Spleen (tissue), 13 donors: ENCODE measurements at regions of chr19 and their contacts with region 1.

Region 1: GRCh38 chr19:33143897-33144405 is 12.0 kb downstream of the WDR88 start:
- DNase-seq: peak; percentile 85
- H3K4me3 ChIP-seq: peak overlapping the region in 1 of 8 donors; percentile 41
- H3K27ac ChIP-seq: peak overlapping the region in 2 of 8 donors; percentile 42 to 65
- H3K4me1 ChIP-seq: peaks cover 4 to 12% (median 6%) of the 10 kb centered on the region in 6 donors
- H3K27me3 ChIP-seq: peaks cover 0 to 11% (median 0%) of the 10 kb centered on the region in 7 donors
- CTCF ChIP-seq: peak; percentile 77 to 94 (median 92)
- POLR2A ChIP-seq: no peak

Region 2: GRCh38 chr19:33176670-33177416 is 32.9 kb after region 1 on chr19:
- intact Hi-C with region 1: loop called (anchors 5 kb)
- DNase-seq: peak; percentile 98
- H3K4me3 ChIP-seq: peak overlapping the region; percentile 66 to 97 (median 82)
- H3K27ac ChIP-seq: peak overlapping the region; percentile 91 to 98 (median 96)
- H3K4me1 ChIP-seq: peaks cover 12 to 57% (median 39%) of the 10 kb centered on the region in 6 donors
- H3K27me3 ChIP-seq: no peaks in the 10 kb centered on the region
- CTCF ChIP-seq: peak in 3 of 11 experiments; percentile 5 to 40 (median 26)
- POLR2A ChIP-seq: peak in 2 of 3 donors; percentile 56 to 73